Calu3 (cell line): ENCODE measurements at regions of chr6 and their contacts with region 1.

Region 1: GRCh38 chr6:95185874-95186273 is 391.5 kb upstream of the MANEA start:
- DNase-seq: no peak
- H3K4me3 Mint-ChIP-seq: no peak overlapping the region
- H3K27ac Mint-ChIP-seq: no peak overlapping the region
- H3K4me1 Mint-ChIP-seq: peaks cover 8% of the 10 kb centered on the region
- H3K27me3 Mint-ChIP-seq: no peaks in the 10 kb centered on the region
- CTCF ChIP-seq: no peak

Region 2: GRCh38 chr6:94751641-94752329 is 434.1 kb before region 1 on chr6:
- CTCF ChIA-PET with region 1: no interaction called
- intact Hi-C with region 1: no loop called
- DNase-seq: no peak
- H3K4me3 Mint-ChIP-seq: no peak overlapping the region
- H3K27ac Mint-ChIP-seq: no peak overlapping the region
- H3K4me1 Mint-ChIP-seq: no peaks in the 10 kb centered on the region
- H3K27me3 Mint-ChIP-seq: no peaks in the 10 kb centered on the region
- CTCF ChIP-seq: no peak

Region 3: GRCh38 chr6:94988701-94989100 is 197.2 kb before region 1 on chr6:
- CTCF ChIA-PET with region 1: no interaction called
- intact Hi-C with region 1: no loop called
- DNase-seq: no peak
- H3K4me3 Mint-ChIP-seq: no peak overlapping the region
- H3K27ac Mint-ChIP-seq: no peak overlapping the region
- H3K4me1 Mint-ChIP-seq: no peaks in the 10 kb centered on the region
- H3K27me3 Mint-ChIP-seq: no peaks in the 10 kb centered on the region
- CTCF ChIP-seq: no peak

Region 4: DNA sequence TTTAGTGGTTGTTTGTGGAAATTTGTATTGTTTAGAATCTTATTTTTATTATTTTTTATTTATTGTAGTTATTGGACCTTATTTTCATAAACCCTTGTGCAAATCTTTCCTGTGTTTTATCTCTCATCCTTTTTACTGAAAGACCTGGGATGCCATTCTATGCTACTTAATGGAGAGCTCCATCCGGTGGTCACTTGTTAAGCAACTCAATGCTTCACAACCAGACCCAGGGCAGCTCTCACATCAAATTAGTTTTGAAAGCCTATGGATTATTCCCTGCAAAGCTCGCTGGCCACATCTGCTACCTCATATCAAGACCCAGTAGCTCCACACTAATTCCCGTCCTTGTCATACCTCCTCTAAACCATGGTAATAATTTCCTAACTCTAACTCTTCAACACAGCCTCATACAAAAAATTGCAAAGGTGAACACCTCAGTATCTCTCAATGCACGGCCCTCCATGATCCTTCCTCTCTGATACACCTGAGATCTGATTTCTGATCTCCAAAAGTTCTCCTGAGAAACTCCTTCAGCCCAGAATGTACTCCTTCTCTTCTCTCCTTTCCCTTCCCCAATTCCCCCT is 94.9 kb after region 1 on chr6:
- CTCF ChIA-PET with region 1: no interaction called
- intact Hi-C with region 1: loop called (anchors 5 kb)
- DNase-seq: peak; percentile 11
- H3K4me3 Mint-ChIP-seq: no peak overlapping the region
- H3K27ac Mint-ChIP-seq: no peak overlapping the region
- H3K4me1 Mint-ChIP-seq: peaks cover 8% of the 10 kb centered on the region
- H3K27me3 Mint-ChIP-seq: no peaks in the 10 kb centered on the region
- CTCF ChIP-seq: no peak

Region 5: GRCh38 chr6:95784869-95785268 is 599.0 kb after region 1 on chr6:
- CTCF ChIA-PET with region 1: no interaction called
- intact Hi-C with region 1: no loop called
- DNase-seq: no peak
- H3K4me3 Mint-ChIP-seq: no peak overlapping the region
- H3K27ac Mint-ChIP-seq: no peak overlapping the region
- H3K4me1 Mint-ChIP-seq: peaks cover 7% of the 10 kb centered on the region
- H3K27me3 Mint-ChIP-seq: no peaks in the 10 kb centered on the region
- CTCF ChIP-seq: no peak